Pancreas (tissue), 10 donors: ENCODE measurements at regions of chr11 and their contacts with region 1.

Region 1: DNA sequence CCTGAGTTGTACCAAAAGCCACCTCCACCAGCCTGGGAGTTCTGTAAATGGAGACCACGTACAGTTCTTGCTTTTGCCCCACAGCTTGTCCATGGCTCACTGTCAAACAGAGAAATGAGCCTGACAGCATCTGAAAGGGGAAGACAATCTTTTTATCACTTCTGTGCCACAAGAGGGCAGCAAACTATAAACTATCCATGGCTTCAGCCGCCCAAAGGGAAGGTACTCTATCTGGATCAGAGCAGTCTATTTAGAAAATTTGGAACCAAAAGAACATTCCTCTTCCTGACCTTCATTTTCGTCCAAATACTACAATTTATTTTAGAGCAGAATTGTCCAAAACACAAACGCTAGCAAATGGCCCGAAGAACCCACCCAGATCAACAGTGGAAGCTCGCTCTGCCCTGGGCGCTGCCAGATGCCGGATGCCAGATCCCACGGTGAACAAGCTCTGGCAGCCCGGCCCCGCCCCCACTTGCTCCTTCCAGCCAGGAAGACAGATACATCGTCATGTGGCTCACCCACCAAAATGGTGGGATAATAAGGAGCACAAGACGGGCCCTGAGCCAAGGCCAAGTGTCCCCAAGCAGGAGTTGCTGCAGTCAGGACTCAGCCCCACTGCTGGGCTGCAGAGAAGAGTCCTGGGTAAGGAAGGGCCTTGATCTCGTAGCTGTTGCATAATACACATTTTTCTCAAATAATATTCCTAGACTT is 23.9 kb upstream of the SCGB1A1 start:
- DNase-seq: peak; percentile 54 to 82 (median 73)
- ATAC-seq: peak; percentile 85 to 96 (median 91)
- H3K4me3 ChIP-seq: peak overlapping the region in 2 of 4 donors; percentile 5 to 27
- H3K27ac ChIP-seq: peak overlapping the region in 2 of 4 donors; percentile 17 to 36
- H3K4me1 ChIP-seq: no peaks in the 10 kb centered on the region
- H3K27me3 ChIP-seq: no peaks in the 10 kb centered on the region
- CTCF ChIP-seq: peak; percentile 17 to 73 (median 53)

Region 2: DNA sequence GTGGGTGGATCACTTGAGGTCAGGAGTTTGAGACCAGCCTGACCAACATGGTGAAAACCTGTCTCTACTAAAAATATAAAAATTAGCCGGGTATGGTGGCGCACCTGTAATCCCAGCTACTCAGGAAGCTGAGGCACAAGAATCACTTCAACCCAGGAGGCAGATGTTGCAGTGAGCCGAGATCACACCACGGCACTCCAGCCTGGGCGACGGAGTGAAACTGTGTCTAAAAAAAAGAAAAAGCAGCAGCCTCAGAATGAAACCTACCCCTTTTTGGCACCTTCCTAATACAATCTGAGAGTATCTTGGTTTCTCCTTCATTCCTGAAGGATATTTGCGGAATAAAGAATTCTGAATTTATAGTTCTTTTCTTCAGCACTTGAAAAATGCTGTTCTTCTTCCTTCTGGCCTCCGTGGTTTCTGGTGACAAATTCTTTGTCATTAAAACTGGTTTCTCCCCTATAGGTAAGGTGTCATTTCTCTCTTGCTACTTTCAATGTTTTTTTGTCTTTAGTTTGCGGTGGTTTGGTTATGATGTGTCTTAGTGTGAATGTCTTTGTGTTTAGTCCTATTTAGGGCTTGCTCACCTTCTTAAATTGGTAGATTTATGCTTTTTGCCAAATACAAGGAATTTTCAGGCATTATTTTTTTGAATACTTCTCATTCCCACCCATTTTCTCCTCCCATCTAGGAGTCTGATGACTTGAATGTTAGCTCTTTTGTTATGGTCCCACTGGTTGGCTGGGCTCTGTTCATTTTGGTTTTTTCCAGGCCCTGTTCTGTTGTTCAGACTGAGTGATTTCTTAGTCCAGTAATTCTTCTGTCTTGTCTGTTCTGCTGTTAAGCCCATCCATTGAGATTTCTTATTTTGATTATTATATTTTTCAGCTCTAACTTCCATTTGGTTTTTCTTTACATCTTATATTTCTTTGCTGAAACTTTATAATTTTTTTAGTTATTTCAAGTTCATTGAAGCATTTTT is 42.3 kb before region 1 on chr11:
- intact Hi-C with region 1: no loop called
- DNase-seq: no peak
- ATAC-seq: no peak
- H3K4me3 ChIP-seq: no peak overlapping the region
- H3K27ac ChIP-seq: no peak overlapping the region
- H3K4me1 ChIP-seq: peaks cover 0 to 13% (median 10%) of the 10 kb centered on the region in 3 donors
- H3K27me3 ChIP-seq: no peaks in the 10 kb centered on the region
- CTCF ChIP-seq: no peak

Region 3: DNA sequence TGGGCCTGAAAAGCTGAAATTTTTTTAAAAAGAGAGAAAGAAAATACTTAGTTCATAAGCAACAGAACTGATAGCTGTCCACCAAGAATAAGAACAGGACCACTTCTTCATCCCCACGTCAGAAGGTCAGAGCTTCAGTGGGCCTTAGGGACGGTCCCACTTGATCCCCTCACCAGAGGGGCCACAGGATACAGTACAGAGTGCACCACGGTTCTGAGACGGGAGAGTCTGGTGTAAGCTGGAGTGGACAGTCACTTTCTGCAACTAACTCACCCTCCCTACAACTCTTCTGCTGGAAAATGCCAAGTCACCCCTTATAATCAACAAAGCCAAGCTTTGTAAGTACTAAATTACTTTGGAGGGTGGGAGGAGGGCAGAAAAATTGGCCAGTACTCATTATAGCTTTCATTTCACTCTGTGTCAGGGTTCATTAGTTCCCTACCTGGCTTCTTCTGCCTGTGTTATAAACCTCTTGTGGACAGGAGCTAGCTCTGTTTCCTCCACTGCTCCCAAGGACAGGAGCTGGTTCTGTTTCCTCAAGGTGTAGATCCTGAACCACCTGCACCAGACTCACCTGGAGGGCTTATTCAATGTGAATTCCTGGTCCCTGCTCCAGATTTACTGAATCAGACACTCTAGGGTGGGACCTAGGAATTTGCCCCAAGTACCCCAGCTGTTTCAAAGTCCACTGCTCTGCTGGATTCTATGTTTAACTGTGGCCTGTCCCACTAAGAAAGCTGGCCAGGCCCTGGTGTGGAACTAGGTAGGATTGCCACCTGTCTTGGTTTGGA is 63.4 kb after region 1 on chr11:
- intact Hi-C with region 1: no loop called
- DNase-seq: no peak
- ATAC-seq: peak in 2 of 4 donors; percentile 17 to 43
- H3K4me3 ChIP-seq: no peak overlapping the region
- H3K27ac ChIP-seq: no peak overlapping the region
- H3K4me1 ChIP-seq: no peaks in the 10 kb centered on the region
- H3K27me3 ChIP-seq: no peaks in the 10 kb centered on the region
- CTCF ChIP-seq: no peak

Region 4: DNA sequence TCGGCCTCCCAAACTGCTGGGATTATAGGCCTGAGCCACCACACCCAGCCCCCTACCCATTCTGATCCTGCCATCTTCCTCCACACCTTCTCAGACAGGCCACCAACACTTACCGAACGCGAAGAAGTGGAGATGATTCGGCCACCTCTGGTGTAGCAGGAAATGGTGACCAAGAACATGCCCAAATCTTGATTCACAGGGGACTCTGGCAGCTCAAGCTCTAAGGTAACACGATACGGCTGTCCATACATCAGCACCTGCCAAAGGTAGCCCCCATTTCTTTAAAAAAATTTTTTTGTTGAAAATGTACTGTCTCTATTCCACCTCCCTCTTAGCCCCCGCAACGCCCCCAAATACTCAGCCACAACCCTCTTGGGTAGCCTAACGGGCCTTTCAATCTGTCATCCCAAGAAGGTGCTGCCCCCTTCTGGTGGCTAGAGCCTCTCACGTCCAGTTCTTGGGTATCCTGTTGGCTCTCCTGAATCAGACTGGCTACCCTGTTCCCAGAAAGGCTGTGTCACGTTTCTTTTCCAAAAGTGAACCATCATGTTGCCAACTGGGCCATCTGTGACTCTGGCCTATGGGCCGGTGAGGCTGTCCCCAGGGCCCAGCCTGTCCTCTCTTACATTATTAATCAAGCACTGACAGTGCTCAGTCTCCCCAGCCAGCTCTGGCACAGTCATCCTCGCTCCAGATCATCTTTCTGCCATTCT is 299.6 kb after region 1 on chr11:
- intact Hi-C with region 1: loop called in 1 of 3 experiments (anchors 10 kb)
- DNase-seq: peak; percentile 68 to 81 (median 78)
- ATAC-seq: peak; percentile 77 to 96 (median 92)
- H3K4me3 ChIP-seq: no peak overlapping the region
- H3K27ac ChIP-seq: no peak overlapping the region
- H3K4me1 ChIP-seq: peaks cover 0 to 3% (median 0%) of the 10 kb centered on the region in 3 donors
- H3K27me3 ChIP-seq: no peaks in the 10 kb centered on the region
- CTCF ChIP-seq: peak; percentile 42 to 75 (median 68)